ENCODE measurements at regions of chr15 and their contacts with region 1.

Region 1: GRCh38 chr15:41603941-41604911 is 45.2 kb downstream of the TYRO3 start:
- DNase-seq: peak; percentile 79
- ATAC-seq: peak; percentile 92

Region 2: DNA sequence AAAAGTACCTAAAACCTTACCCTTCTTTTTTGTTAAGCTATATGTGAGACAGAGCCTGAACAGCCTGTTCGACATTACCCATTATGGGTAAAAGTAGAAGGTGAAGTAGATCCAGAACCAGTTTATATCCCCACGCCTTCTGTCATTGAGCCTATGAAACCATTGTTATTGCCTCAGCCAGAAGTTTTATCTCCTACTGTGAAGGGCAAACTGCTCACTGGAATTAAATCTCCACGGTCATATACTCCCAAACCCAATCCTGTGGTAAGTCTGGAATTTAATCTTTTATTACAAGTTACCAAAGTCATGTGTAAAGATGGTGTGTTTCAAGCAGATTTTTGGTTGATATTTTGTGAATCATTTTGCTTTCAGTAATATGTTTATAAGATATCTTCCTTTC is 122.9 kb after region 1 on chr15:
- intact Hi-C with region 1: loop called (anchors 10 kb)
- DNase-seq: no peak
- ATAC-seq: no peak

Region 3: DNA sequence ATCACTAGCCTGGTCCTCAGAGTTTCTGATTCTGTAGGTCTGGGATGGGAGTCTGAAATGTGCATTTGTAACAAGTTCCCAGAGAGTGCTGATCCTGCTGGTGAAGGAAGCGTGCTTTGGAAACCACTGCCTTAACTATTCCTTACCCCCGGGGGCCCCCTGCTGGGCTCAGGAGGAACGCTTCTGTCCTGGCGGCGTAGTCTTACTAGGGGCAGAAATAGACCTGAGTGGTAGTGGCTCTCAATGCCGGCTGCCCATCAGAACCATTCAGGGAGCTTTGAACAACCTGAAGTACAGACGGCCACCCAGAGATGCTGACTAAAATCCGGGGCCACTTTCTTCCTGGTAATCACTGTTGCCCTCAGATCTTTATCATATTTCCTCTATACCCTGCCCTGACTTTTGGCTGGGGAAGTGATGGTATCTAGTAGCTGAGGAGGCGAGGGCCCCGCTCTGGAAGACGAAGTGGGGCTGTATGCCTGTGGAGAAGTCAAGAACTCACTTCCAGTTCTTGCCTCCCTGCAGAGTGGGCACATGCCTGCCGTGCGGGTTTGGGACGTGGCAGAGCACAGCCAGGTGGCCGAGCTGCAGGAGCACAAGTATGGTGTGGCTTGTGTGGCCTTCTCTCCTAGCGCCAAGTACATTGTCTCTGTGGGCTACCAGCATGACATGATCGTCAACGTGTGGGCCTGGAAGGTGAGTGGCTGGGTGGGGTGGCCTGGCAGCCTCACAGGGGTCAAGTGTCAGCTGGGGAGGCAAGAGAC is 207.4 kb after region 1 on chr15:
- intact Hi-C with region 1: loop called (anchors 5 kb)
- DNase-seq: peak; percentile 88
- ATAC-seq: peak; percentile 91